Endothelial cell of umbilical vein (primary cell): ENCODE measurements at regions of chr6 and their contacts with region 1.

Region 1: GRCh38 chr6:105431226-105431625 is 28.3 kb upstream of the PREP start:
- DNase-seq: peak; percentile 73
- H3K4me3 ChIP-seq: no peak overlapping the region
- H3K27ac ChIP-seq: peak overlapping the region; percentile 65
- H3K4me1 ChIP-seq: peaks cover 40% of the 10 kb centered on the region
- H3K27me3 ChIP-seq: no peaks in the 10 kb centered on the region
- CTCF ChIP-seq: peak; percentile 30 to 36
- POLR2A ChIP-seq: no peak

Region 2: GRCh38 chr6:105402939-105403935 is 28.0 kb before region 1 on chr6 and contains the start of gene PREP:
- CTCF ChIA-PET with region 1: interaction called, 17 read pairs
- POLR2A ChIA-PET with region 1: no interaction called
- dilution Hi-C with region 1: no loop called
- intact Hi-C with region 1: no loop called
- DNase-seq: peak; percentile 85
- H3K4me3 ChIP-seq: peak within 1 kb of the TSS; percentile 81 to 97 (median 84)
- H3K27ac ChIP-seq: peak within 1 kb of the TSS; percentile 62
- H3K4me1 ChIP-seq: peaks cover 6% of the 10 kb centered on the region
- H3K27me3 ChIP-seq: no peaks in the 10 kb centered on the region
- CTCF ChIP-seq: peak; percentile 68 to 74
- POLR2A ChIP-seq: peak; percentile 64
- total RNA-seq, gene PREP: 37.7 and 40.7 TPM in 2 replicates

Region 3: GRCh38 chr6:105484238-105485161 is 53.3 kb after region 1 on chr6:
- CTCF ChIA-PET with region 1: interaction called, 89 read pairs
- POLR2A ChIA-PET with region 1: interaction called, 7 read pairs
- dilution Hi-C with region 1: no loop called
- intact Hi-C with region 1: loop called (anchors 1 kb)
- DNase-seq: peak; percentile 64
- H3K4me3 ChIP-seq: no peak overlapping the region
- H3K27ac ChIP-seq: no peak overlapping the region
- H3K4me1 ChIP-seq: peaks cover 22% of the 10 kb centered on the region
- H3K27me3 ChIP-seq: no peaks in the 10 kb centered on the region
- CTCF ChIP-seq: peak; percentile 59 to 60
- POLR2A ChIP-seq: no peak

Region 4: GRCh38 chr6:105644073-105644489 is 212.9 kb after region 1 on chr6:
- CTCF ChIA-PET with region 1: interaction called, 5 read pairs
- POLR2A ChIA-PET with region 1: no interaction called
- dilution Hi-C with region 1: no loop called
- intact Hi-C with region 1: loop called (anchors 5 kb)
- DNase-seq: no peak
- H3K4me3 ChIP-seq: no peak overlapping the region
- H3K27ac ChIP-seq: no peak overlapping the region
- H3K4me1 ChIP-seq: no peaks in the 10 kb centered on the region
- H3K27me3 ChIP-seq: no peaks in the 10 kb centered on the region
- CTCF ChIP-seq: no peak
- POLR2A ChIP-seq: no peak

Region 5: GRCh38 chr6:105835373-105835772 is 404.1 kb after region 1 on chr6:
- CTCF ChIA-PET with region 1: interaction called, 16 read pairs
- POLR2A ChIA-PET with region 1: no interaction called
- dilution Hi-C with region 1: no loop called
- intact Hi-C with region 1: loop called (anchors 1 kb)
- DNase-seq: peak; percentile 6
- H3K4me3 ChIP-seq: no peak overlapping the region
- H3K27ac ChIP-seq: no peak overlapping the region
- H3K4me1 ChIP-seq: no peaks in the 10 kb centered on the region
- H3K27me3 ChIP-seq: no peaks in the 10 kb centered on the region
- CTCF ChIP-seq: no peak
- POLR2A ChIP-seq: no peak

Region 6: DNA sequence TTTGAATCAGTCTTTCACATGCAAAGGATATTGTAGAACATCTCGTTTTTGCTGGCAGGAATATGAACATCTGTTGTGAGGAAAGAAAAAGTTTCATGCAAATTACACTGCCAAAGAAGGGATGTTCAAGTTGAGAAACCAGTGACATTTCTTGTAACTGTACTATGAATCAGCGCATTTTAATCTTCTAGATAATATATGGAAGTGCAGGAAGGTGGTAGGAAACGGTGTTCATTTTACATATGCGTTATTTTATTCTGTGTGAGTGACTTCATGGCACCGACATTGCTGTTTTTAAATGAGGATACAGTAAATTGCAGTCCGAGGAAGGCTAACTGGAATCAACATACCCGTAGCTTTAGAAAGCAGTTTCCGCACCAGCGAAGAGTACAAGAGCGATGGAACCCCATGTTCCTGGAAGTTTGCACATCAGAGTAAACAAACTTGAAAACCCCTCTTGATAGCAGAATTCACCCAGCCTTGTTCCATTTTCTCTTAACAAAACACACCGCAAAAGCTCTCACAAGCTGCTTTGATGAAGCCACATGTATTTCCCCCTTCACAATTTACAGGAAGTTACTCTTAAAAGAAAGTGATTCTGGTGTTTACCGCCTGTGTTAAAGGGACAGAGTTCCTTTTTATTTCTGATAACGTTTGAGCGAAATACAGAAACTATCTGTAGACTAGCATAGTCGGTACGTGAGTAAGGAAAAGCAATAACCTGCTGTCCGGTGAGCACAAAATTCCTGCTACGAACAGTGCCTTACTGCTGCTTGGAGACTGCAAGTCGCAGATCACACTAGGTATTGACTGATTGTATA is 666.4 kb after region 1 on chr6:
- CTCF ChIA-PET with region 1: interaction called, 3 read pairs
- POLR2A ChIA-PET with region 1: no interaction called
- dilution Hi-C with region 1: no loop called
- intact Hi-C with region 1: loop called (anchors 1 kb)
- DNase-seq: peak; percentile 65
- H3K4me3 ChIP-seq: peak overlapping the region; percentile 35 to 69 (median 63)
- H3K27ac ChIP-seq: peak overlapping the region; percentile 2
- H3K4me1 ChIP-seq: peaks cover 17% of the 10 kb centered on the region
- H3K27me3 ChIP-seq: peaks cover 10 to 16% of the 10 kb centered on the region in 2 experiments
- CTCF ChIP-seq: no peak
- POLR2A ChIP-seq: peak; percentile 18

Region 7: GRCh38 chr6:106339334-106340029 is 908.3 kb after region 1 on chr6:
- CTCF ChIA-PET with region 1: interaction called, 11 read pairs
- POLR2A ChIA-PET with region 1: no interaction called
- dilution Hi-C with region 1: no loop called
- intact Hi-C with region 1: no loop called
- DNase-seq: peak; percentile 57
- H3K4me3 ChIP-seq: no peak overlapping the region
- H3K27ac ChIP-seq: no peak overlapping the region
- H3K4me1 ChIP-seq: no peaks in the 10 kb centered on the region
- H3K27me3 ChIP-seq: peaks cover 15 to 24% of the 10 kb centered on the region in 2 experiments
- CTCF ChIP-seq: peak; percentile 81 to 85
- POLR2A ChIP-seq: no peak